ENCODE measurements at regions of chr6 and their contacts with region 1.

Region 1: GRCh38 chr6:26064619-26065257 is 22.5 kb upstream of the HFE start:
- DNase-seq: peak; percentile 45
- H3K4me3 ChIP-seq: no peak overlapping the region
- CTCF ChIP-seq: peak; percentile 72

Region 2: GRCh38 chr6:26097268-26097875 is 32.6 kb after region 1 on chr6:
- in situ Hi-C with region 1: loop called (anchors 5 kb)
- DNase-seq: peak; percentile 66
- H3K4me3 ChIP-seq: no peak overlapping the region
- CTCF ChIP-seq: peak; percentile 59

Measured in astrocyte of the spinal cord (primary cell).